Activated naive CD4-positive, alpha-beta T cell treated with anti-CD3 and anti-CD28 coated beads for 36 hours (primary cell): ENCODE measurements at regions of chr14 and their contacts with region 1.

Region 1: GRCh38 chr14:22556990-22557623 is 31.9 kb downstream of the DAD1 start:
- DNase-seq: peak; percentile 95
- H3K4me3 Mint-ChIP-seq: peak overlapping the region; percentile 74
- H3K27ac Mint-ChIP-seq: peak overlapping the region; percentile 97
- H3K4me1 Mint-ChIP-seq: peaks cover 84% of the 10 kb centered on the region
- H3K27me3 Mint-ChIP-seq: no peaks in the 10 kb centered on the region

Region 2: DNA sequence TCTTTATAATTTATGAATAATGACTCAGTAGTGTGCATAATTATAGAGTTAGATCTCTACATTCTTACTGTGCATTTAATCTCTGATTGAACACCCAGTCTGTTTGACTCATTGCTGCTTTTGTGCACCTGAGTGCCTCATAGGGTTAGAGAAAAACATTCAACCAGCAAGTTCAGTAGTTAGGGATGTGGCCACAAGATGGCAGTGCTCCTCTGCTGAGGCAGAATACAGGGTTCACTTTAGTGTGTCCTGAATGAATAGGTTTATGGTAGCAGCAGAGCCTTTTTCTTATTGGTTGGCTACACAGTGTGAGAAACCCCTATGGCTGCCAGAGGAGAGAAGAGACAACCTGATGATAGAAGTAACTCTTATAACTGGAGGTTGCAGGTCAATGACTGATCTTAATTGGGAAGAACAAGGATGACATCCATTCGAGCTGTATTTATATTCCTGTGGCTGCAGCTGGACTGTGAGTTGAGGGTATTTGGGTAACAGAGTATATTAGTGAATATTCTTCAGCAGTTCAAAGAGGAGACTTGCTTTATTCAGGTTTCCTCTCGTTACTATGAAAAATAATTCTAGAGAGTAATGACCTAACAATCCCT is 688.6 kb before region 1 on chr14:
- CTCF ChIA-PET with region 1: interaction called, 3 read pairs
- intact Hi-C with region 1: loop called (anchors 2 kb)
- DNase-seq: peak; percentile 95
- H3K4me3 Mint-ChIP-seq: peak overlapping the region; percentile 71
- H3K27ac Mint-ChIP-seq: peak overlapping the region; percentile 83
- H3K4me1 Mint-ChIP-seq: peaks cover 42% of the 10 kb centered on the region
- H3K27me3 Mint-ChIP-seq: no peaks in the 10 kb centered on the region

Region 3: GRCh38 chr14:22163051-22163450 is 394.1 kb before region 1 on chr14:
- CTCF ChIA-PET with region 1: no interaction called
- intact Hi-C with region 1: loop called (anchors 5 kb)
- DNase-seq: no peak
- H3K4me3 Mint-ChIP-seq: peak overlapping the region; percentile 73
- H3K27ac Mint-ChIP-seq: peak overlapping the region; percentile 82
- H3K4me1 Mint-ChIP-seq: peaks cover 15% of the 10 kb centered on the region
- H3K27me3 Mint-ChIP-seq: no peaks in the 10 kb centered on the region

Region 4: DNA sequence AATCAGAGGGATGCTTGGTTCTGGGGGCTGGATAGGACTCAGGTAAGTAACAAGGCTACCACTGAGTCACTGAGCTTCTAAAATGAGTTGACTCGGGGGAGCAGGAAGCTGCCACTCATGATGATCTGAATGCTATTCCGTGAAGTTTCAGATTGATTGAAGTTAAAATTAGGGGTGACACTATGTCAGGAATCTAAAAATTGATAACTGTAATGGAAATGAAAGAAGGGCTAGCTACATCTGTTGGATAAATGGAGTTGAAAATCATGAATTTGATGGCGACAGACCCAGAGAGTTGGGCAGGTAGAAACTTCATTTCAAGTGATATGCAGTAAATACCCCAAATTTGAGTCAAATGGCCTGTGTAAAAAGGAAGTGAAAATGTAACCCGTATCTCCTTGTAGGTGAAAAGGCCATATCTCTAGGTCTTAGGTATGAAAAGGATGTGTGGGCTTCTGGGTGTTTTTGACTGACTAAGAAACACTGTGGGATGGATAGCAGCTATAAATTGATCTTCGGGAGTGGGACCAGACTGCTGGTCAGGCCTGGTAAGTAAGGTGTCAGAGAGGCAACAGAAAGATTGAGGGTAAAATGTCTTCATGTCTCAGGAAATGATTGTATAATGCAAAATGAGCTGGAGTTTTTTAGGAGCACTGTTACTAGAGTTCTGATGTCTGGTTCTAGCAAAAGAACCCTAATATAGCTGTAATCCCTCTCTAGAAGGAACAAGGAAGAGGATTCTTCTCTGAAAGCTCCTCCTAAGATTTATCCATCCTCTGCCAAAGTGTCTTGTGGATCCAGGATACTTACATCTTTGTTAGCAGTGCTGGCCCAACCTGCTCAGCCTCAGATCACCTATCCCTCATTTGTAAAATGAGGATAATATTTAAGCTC is 25.4 kb before region 1 on chr14:
- CTCF ChIA-PET with region 1: interaction called, 67 read pairs
- intact Hi-C with region 1: loop called (anchors 1 kb)
- DNase-seq: peak; percentile 65
- H3K4me3 Mint-ChIP-seq: peak overlapping the region; percentile 77
- H3K27ac Mint-ChIP-seq: peak overlapping the region; percentile 98
- H3K4me1 Mint-ChIP-seq: peaks cover 82% of the 10 kb centered on the region
- H3K27me3 Mint-ChIP-seq: no peaks in the 10 kb centered on the region

Region 5: GRCh38 chr14:22646570-22647254 is 89.6 kb after region 1 on chr14:
- CTCF ChIA-PET with region 1: interaction called, 7 read pairs
- intact Hi-C with region 1: loop called (anchors 1 kb)
- DNase-seq: no peak
- H3K4me3 Mint-ChIP-seq: no peak overlapping the region
- H3K27ac Mint-ChIP-seq: peak overlapping the region; percentile 39
- H3K4me1 Mint-ChIP-seq: peaks cover 7% of the 10 kb centered on the region
- H3K27me3 Mint-ChIP-seq: no peaks in the 10 kb centered on the region

Region 6: GRCh38 chr14:22852940-22853767 is 296.0 kb after region 1 on chr14:
- CTCF ChIA-PET with region 1: interaction called, 22 read pairs
- intact Hi-C with region 1: loop called (anchors 1 kb)
- DNase-seq: peak; percentile 95
- H3K4me3 Mint-ChIP-seq: peak overlapping the region; percentile 72
- H3K27ac Mint-ChIP-seq: peak overlapping the region; percentile 84
- H3K4me1 Mint-ChIP-seq: peaks cover 24% of the 10 kb centered on the region
- H3K27me3 Mint-ChIP-seq: no peaks in the 10 kb centered on the region